AG04449 (cell line): ENCODE measurements at regions of chr20 and their contacts with region 1.

Region 1: DNA sequence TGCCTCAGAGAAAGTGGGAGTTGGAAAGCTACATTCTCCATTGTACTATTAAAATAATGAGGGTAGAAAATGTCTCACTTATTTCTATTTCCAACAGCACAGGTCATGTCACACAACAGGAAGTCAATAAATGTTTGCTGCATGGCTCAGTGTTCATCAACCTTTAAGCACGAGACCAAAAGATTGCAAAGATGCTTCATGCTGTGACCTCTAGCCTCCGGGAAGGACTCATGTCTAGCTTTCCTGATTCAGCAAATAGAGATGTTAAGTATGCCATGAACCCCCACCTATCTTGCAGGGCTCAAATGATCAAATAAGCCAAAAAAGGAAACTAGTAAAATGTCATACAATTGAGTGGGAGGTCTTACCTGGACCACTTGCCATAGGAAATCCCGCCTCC is 57.4 kb downstream of the NCOA6 start:
- DNase-seq: peak; percentile 33
- H3K4me3 ChIP-seq: no peak overlapping the region
- CTCF ChIP-seq: no peak

Region 2: GRCh38 chr20:34190679-34191090 is 577.4 kb before region 1 on chr20:
- CTCF ChIA-PET with region 1: interaction called, 17 read pairs
- POLR2A ChIA-PET with region 1: no interaction called
- DNase-seq: peak; percentile 57
- H3K4me3 ChIP-seq: no peak overlapping the region
- CTCF ChIP-seq: peak; percentile 96

Region 3: DNA sequence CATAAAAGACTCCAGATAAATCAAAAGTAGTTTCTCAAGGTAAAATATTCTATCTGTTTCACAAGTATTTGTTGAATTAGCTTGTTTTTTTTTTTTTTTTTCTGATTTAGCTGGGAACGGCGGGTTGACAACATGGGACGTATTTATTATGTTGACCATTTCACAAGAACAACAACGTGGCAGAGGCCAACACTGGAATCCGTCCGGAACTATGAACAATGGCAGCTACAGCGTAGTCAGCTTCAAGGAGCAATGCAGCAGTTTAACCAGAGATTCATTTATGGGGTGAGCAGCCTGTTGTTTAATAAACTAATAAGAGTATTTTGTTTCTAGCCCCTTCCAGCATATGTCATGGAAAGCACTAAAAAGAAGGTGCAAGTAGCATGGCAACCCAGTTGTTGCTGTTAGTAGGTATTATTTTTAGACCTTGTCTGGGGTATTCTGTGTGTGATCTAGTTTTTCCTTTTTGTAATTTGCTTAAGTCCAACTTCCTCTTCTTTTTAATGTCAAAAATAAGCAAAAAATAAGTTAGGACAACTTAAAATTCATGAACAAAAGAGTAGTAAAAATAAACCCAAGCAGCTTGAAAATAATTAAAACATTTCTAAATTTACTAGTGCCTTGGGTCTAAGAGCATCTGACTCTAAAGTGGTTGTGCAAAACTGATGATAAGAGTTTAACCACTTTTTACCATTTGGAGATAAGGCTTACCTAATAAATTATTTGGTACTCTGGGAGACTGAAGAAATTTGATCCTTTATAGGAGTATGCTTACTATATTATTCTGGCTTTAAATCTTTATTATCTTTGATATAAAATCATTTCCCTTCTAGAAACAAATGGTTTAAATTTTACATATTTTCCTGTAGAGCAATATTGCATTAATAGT is 322.7 kb before region 1 on chr20:
- CTCF ChIA-PET with region 1: no interaction called
- POLR2A ChIA-PET with region 1: no interaction called
- DNase-seq: no peak
- H3K4me3 ChIP-seq: no peak overlapping the region
- CTCF ChIP-seq: no peak

Region 4: DNA sequence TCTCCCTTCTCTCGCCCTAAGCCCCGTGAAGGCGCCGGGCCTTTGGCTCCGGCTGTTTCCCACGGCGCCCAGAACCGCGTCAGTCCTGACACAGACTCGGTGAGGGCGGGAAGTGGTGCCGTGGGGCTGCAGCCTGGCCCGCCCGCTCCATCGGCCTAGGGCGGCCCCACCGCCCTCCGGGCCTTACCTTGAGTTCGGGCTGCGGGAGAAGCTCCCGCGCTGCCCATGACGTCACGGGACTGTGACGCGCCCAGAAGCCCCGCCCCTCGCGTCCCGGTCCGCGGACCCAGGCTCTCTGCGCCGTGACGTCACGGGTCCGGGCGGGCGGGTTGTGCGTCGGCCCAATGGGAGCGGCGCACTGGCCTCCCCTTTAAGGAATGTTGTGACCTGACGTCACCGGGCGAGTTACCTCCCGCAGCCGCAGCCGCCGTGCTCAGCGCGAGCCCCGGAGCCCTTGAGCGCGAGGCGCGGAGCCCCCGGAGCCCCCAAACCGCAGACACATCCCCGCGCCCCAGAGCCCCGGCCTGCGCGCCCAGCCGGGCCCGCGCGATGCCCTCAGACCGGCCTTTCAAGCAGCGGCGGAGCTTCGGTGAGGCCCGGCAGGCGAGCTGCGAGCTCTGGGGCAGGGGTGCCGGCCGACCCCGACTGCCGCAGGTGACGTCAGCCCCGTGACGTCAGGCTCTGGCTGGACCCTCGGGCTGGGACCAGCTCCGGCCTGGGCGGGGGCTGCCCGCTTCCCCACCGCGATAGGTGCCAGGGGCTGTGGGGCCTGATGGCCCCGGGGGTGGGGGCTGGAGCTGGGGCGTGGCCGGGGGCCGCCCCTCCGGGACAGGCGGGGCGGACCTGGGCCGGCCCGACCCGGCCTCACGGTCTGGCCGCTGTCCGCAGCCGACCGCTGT is 209.5 kb before region 1 on chr20 and contains the start of gene MAP1LC3A:
- CTCF ChIA-PET with region 1: interaction called, 21 read pairs
- POLR2A ChIA-PET with region 1: no interaction called
- DNase-seq: peak; percentile 69
- H3K4me3 ChIP-seq: peak within 1 kb of the TSS; percentile 71
- CTCF ChIP-seq: no peak

Region 5: GRCh38 chr20:34713194-34713943 is 54.7 kb before region 1 on chr20:
- CTCF ChIA-PET with region 1: interaction called, 15 read pairs
- POLR2A ChIA-PET with region 1: interaction called, 3 read pairs
- DNase-seq: peak; percentile 99
- H3K4me3 ChIP-seq: no peak overlapping the region
- CTCF ChIP-seq: no peak

Region 6: DNA sequence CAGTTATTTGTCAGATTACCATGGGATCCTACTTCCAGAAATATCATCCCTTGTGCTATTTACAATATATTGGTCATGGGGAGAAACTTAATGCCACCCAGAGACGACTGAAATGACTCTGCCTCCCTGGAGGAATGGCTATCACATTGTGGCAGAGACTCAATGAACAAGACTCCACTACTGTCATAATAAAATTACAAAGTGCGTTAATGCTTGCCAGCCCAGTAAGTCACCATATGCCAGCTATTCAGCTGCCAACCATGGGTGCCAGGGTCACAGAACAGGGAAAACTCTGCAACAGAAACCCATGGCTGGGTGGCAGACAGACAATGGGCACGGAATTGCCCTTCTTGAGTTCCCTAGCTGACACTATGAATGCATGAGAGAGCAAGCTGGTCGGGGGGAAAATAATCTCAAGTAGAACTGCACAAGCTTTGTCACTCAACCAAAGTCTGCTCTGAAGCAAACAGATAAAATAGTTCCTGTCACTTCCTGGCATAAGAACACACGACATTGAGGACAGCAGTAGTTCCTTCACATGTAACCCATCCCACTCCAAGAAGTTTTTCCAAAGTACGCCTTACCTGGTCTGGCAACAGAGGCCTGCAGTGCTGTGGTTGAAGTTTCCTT is 31.9 kb before region 1 on chr20:
- CTCF ChIA-PET with region 1: interaction called, 11 read pairs
- POLR2A ChIA-PET with region 1: no interaction called
- DNase-seq: no peak
- H3K4me3 ChIP-seq: no peak overlapping the region
- CTCF ChIP-seq: no peak

Region 7: DNA sequence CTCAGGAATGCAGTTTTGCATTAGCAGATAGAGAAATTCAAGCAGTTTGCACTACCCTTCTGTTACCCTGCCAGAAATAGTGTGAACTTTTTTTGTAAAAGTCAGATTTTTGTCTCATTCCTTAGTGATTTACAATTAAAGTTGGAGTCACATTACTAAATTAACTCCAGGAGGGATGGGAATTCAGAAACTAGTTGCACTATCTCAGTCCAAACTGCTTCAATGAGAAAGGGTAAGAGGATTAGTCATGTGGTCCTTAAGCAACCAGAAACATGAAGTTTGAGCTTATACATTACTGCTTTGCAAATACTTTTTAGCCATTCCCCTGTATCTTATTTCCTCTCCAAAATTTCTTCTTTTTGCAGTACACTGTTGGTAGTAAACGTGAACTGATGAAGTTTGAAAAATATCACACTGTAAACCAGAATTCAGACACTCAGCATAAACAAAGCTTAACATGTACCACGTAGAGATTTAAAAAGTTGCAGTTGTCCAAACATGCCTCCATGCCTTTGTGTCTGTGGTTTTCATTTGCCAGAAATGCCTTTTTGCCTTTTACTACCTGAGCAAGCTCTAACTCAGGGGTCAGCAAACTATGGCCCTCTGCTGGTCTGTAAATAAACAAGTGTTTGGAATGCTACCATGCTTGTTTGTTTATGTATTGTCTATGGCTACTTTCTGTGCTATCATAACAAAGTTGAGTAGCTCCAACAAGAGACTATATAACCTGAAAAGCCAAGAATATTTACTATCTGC is 14.2 kb before region 1 on chr20:
- CTCF ChIA-PET with region 1: interaction called, 97 read pairs
- POLR2A ChIA-PET with region 1: interaction called, 3 read pairs
- DNase-seq: peak; percentile 16
- H3K4me3 ChIP-seq: no peak overlapping the region
- CTCF ChIP-seq: no peak

Region 8: GRCh38 chr20:34791289-34792020 is 23.4 kb after region 1 on chr20:
- CTCF ChIA-PET with region 1: interaction called, 10 read pairs
- POLR2A ChIA-PET with region 1: no interaction called
- DNase-seq: peak; percentile 44
- H3K4me3 ChIP-seq: no peak overlapping the region
- CTCF ChIP-seq: no peak